Activated CD4-positive, alpha-beta memory T cell treated with anti-CD3 and anti-CD28 coated beads, Interleukin-2, amount 10 ng/mL, durations not matched to agents 7 days and 5 days (primary cell): ENCODE measurements at regions of chr1 and their contacts with region 1.

Region 1: DNA sequence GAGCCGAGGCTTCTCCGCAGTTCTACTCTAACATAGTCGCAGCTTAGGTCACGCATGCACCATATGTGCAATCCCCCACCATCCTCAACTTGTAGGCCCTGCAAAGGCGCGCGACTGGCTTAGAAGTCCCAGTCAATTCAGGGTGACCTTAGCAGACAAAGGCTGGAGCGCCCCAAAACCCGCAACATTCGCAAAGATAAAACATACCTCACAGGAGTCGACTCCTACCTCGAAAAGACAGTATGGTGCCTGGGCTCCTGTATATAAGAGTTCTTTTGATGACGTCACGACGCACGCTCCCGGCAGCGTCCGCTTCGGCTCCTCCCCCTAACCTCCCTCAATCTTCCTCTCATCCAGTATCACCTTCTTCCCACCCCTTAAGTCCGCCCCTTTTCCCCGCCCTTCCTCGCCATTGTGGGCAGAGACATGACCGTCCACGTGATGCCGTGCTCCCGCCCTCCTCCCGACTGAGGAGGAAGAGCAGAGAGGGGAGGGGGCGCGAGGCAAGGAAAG is at the start of gene GAS5:
- DNase-seq: peak; percentile 100
- H3K4me3 Mint-ChIP-seq: peak within 1 kb of the TSS; percentile 92
- H3K27ac Mint-ChIP-seq: peak within 1 kb of the TSS; percentile 97
- H3K4me1 Mint-ChIP-seq: peaks cover 72% of the 10 kb centered on the region
- H3K27me3 Mint-ChIP-seq: no peaks in the 10 kb centered on the region
- total RNA-seq, gene GAS5: 379 to 394 TPM

Region 2: GRCh38 chr1:173429471-173430402 is 438.1 kb before region 1 on chr1:
- CTCF ChIA-PET with region 1: interaction called, 12 read pairs
- POLR2A ChIA-PET with region 1: interaction called, 13 read pairs
- DNase-seq: peak; percentile 71
- H3K4me3 Mint-ChIP-seq: peak overlapping the region; percentile 36
- H3K27ac Mint-ChIP-seq: peak overlapping the region; percentile 84
- H3K4me1 Mint-ChIP-seq: peaks cover 29% of the 10 kb centered on the region
- H3K27me3 Mint-ChIP-seq: no peaks in the 10 kb centered on the region

Region 3: DNA sequence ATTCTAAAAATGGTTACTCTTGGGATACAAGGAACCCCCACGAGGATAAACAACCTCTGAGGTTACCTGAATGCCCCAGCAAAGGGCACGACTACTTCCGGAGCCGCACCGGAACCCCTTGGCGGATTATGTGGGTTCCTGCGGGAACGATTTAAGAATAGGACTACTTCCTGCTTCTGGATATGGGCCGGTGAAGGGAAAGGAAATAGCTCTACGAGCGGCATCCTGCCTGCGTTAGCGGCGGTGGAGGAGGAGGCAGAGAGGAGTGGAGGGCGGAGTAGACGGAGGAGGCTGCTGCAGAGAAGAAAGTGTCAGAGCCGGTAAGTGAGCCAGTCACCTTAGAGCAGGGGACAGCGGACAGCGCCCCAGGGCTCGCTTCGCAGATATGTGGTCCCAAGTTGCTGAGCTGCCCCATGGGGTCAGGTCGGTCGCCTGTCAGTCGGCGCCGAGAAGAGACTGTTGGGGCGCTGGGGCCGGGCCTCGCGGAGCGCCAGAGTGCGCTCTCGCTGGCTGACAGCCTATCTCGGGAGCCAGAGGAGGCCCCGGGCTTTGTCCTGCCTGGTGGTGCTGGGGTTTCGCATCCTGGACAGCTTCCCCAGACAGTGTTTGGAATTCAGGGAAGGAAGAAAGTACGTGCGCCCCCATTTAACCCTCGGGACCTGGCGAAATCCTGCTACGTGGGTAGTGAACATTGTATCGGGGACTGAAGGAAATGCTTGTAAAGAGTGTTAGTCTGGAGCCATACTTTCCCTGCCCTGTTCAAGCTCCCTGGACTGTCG is 152.9 kb before region 1 on chr1 and contains the start of gene KLHL20:
- CTCF ChIA-PET with region 1: interaction called, 4 read pairs
- POLR2A ChIA-PET with region 1: interaction called, 15 read pairs
- DNase-seq: peak; percentile 89
- H3K4me3 Mint-ChIP-seq: peak within 1 kb of the TSS; percentile 90
- H3K27ac Mint-ChIP-seq: peak within 1 kb of the TSS; percentile 97
- H3K4me1 Mint-ChIP-seq: peaks cover 24% of the 10 kb centered on the region
- H3K27me3 Mint-ChIP-seq: peaks cover 21% of the 10 kb centered on the region
- total RNA-seq, gene KLHL20: 17.7 to 18.9 TPM

Region 4: DNA sequence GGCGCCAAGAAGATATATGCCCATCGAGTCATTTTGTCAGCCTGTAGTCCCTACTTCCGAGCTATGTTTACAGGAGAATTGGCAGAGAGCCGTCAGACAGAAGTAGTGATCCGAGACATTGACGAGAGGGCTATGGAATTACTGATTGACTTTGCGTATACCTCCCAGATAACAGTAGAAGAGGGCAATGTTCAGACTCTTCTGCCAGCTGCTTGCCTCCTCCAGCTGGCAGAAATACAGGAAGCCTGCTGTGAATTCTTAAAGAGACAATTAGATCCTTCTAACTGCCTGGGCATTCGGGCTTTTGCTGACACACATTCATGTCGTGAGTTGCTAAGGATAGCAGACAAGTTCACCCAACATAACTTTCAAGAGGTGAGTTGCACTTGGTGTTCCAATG is 133.9 kb before region 1 on chr1:
- CTCF ChIA-PET with region 1: no interaction called
- POLR2A ChIA-PET with region 1: no interaction called
- DNase-seq: no peak
- H3K4me3 Mint-ChIP-seq: no peak overlapping the region
- H3K27ac Mint-ChIP-seq: no peak overlapping the region
- H3K4me1 Mint-ChIP-seq: peaks cover 10% of the 10 kb centered on the region
- H3K27me3 Mint-ChIP-seq: no peaks in the 10 kb centered on the region

Region 5: GRCh38 chr1:173853074-173853473 is 14.7 kb before region 1 on chr1:
- CTCF ChIA-PET with region 1: no interaction called
- POLR2A ChIA-PET with region 1: interaction called, 20 read pairs
- DNase-seq: no peak
- H3K4me3 Mint-ChIP-seq: no peak overlapping the region
- H3K27ac Mint-ChIP-seq: no peak overlapping the region
- H3K4me1 Mint-ChIP-seq: no peaks in the 10 kb centered on the region
- H3K27me3 Mint-ChIP-seq: no peaks in the 10 kb centered on the region

Region 6: GRCh38 chr1:174153085-174153825 is 285.4 kb after region 1 on chr1:
- CTCF ChIA-PET with region 1: interaction called, 5 read pairs
- POLR2A ChIA-PET with region 1: interaction called, 15 read pairs
- DNase-seq: no peak
- H3K4me3 Mint-ChIP-seq: no peak overlapping the region
- H3K27ac Mint-ChIP-seq: peak overlapping the region; percentile 69
- H3K4me1 Mint-ChIP-seq: peaks cover 59% of the 10 kb centered on the region
- H3K27me3 Mint-ChIP-seq: no peaks in the 10 kb centered on the region

Region 7: DNA sequence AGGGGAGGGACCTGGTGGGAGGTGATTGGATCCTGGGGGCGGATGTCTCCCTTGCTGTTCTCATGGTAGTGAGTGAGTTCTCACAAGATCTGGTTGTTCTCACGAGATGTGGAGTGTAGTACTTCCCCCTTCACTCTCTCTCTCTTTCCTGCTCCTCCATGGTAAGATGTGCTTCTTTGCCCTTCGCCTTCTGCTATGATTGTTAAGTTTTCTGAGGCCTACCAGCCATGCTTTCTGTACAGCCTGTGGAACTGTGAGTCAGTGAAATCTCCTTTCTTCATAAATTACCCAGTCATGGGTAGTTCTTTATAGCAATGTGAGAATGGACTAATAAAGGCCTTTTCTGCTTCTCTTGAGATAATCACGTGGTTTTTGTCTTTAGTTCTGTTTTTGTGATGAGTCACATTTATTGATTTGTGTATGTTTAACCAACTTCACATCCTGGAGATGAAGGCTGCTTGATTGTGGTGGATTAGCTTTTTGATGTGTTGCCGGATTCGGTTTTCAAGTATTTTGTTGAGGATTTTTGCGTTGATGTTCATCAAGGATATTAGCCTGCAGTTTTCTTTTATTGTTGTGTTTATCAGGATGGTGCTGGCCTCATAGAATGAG is 337.0 kb after region 1 on chr1:
- CTCF ChIA-PET with region 1: no interaction called
- POLR2A ChIA-PET with region 1: interaction called, 10 read pairs
- DNase-seq: no peak
- H3K4me3 Mint-ChIP-seq: peak overlapping the region; percentile 36
- H3K27ac Mint-ChIP-seq: peak overlapping the region; percentile 76
- H3K4me1 Mint-ChIP-seq: peaks cover 44% of the 10 kb centered on the region
- H3K27me3 Mint-ChIP-seq: no peaks in the 10 kb centered on the region